H1 (cell line): ENCODE measurements at regions of chr21 and their contacts with region 1.

Region 1: DNA sequence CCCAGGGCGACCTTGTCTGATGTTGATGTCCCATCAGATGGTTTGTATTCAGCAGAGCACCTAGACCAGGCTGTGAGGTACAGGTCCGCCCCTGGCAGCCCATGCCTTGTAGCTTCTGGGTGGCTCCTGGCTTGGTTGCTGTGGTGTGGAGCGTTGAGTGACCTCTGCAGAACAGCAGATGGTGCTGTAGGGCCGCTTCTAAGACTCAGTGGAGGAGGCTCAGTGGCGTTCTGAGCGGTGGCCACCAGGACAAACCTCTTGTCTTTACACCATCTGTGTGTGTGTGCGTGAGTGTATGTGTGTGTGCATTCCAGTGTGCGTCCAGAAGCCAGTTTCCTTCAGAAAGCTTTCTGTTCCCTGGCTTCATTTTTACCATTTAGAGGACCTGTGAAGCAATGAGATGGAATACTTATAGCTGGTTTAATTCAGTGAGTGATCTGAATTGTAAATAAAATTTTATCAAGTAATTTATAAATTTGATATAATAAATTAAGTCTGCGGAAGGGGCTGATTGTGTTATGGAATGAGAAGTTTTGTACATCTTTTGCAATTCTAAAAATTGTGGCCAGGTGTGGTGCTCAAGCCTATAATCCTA is 66.1 kb downstream of the ADARB1 start:
- DNase-seq: peak; percentile 68 to 73
- H3K4me3 ChIP-seq: no peak overlapping the region
- H3K27ac ChIP-seq: no peak overlapping the region
- H3K4me1 ChIP-seq: no peaks in the 10 kb centered on the region
- H3K27me3 ChIP-seq: no peaks in the 10 kb centered on the region
- CTCF ChIP-seq: peak; percentile 90 to 99 (median 99)
- EP300 ChIP-seq: no peak
- POLR2A ChIP-seq: no peak
- RAD21 ChIP-seq: peak; percentile 97

Region 2: DNA sequence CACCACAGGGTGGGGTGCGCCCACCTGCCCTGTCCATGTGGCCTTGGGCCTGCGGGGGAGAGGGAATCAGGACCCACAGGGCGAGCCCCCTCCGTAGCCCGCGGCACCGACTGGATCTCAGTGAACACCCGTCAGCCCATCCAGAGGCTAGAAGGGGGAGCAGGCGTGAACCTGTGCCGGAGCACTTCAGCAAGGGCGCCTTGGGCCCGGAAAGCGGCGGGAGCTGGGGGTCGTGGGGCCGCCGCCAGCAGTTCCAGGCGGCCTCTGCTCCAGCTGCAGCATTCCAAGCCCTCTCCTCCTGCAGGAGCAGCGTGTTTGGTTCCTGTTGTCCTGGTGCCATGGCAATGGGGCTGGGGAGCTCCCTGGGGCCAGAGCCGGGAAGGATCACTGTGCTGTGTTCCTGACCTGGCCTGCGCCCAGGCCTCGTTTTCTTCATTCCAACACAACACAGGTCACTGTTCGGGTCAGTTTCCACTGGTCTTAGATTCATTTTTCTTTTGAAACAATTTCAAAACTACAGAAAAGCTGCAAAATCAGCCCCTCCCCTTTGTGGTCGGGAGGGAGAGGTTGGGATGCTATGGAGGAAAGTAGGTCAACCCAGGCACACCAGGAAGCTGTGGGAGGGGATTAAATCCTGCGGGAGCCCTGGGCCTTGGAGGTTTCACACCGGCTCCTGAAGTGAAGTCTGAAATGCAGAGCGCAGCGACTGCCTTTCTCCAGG is 181.8 kb before region 1 on chr21:
- CTCF ChIA-PET with region 1: interaction called, 19 read pairs
- POLR2A ChIA-PET with region 1: no interaction called
- DNase-seq: no peak
- H3K4me3 ChIP-seq: no peak overlapping the region
- H3K27ac ChIP-seq: 0 out of 2 replicates have a peak overlapping the region, but pooled peaks have one; percentile 38
- H3K4me1 ChIP-seq: no peaks in the 10 kb centered on the region
- H3K27me3 ChIP-seq: no peaks in the 10 kb centered on the region
- CTCF ChIP-seq: no peak
- EP300 ChIP-seq: no peak
- POLR2A ChIP-seq: no peak
- RAD21 ChIP-seq: no peak

Region 3: GRCh38 chr21:45000977-45001728 is 139.3 kb before region 1 on chr21:
- CTCF ChIA-PET with region 1: interaction called, 20 read pairs
- POLR2A ChIA-PET with region 1: no interaction called
- DNase-seq: no peak
- H3K4me3 ChIP-seq: no peak overlapping the region
- H3K27ac ChIP-seq: no peak overlapping the region
- H3K4me1 ChIP-seq: peaks cover 0 to 3% (median 0%) of the 10 kb centered on the region in 4 experiments; a peak in 1 of 7 replicates
- H3K27me3 ChIP-seq: peaks cover 0 to 2% (median 0%) of the 10 kb centered on the region in 4 experiments; a peak in 2 of 7 replicates
- CTCF ChIP-seq: no peak
- EP300 ChIP-seq: no peak
- POLR2A ChIP-seq: no peak
- RAD21 ChIP-seq: no peak

Region 4: GRCh38 chr21:45087022-45087823 is 53.2 kb before region 1 on chr21:
- CTCF ChIA-PET with region 1: interaction called, 15 read pairs
- POLR2A ChIA-PET with region 1: no interaction called
- DNase-seq: no peak
- H3K4me3 ChIP-seq: no peak overlapping the region
- H3K27ac ChIP-seq: no peak overlapping the region
- H3K4me1 ChIP-seq: no peaks in the 10 kb centered on the region; a peak in 1 of 7 replicates
- H3K27me3 ChIP-seq: no peaks in the 10 kb centered on the region; a peak in 1 of 7 replicates
- CTCF ChIP-seq: no peak
- EP300 ChIP-seq: no peak
- POLR2A ChIP-seq: no peak
- RAD21 ChIP-seq: no peak

Region 5: GRCh38 chr21:45120975-45121374 is 19.5 kb before region 1 on chr21:
- CTCF ChIA-PET with region 1: interaction called, 144 read pairs
- POLR2A ChIA-PET with region 1: interaction called, 4 read pairs
- DNase-seq: no peak
- H3K4me3 ChIP-seq: no peak overlapping the region
- H3K27ac ChIP-seq: no peak overlapping the region
- H3K4me1 ChIP-seq: no peaks in the 10 kb centered on the region
- H3K27me3 ChIP-seq: no peaks in the 10 kb centered on the region
- CTCF ChIP-seq: no peak
- EP300 ChIP-seq: no peak
- POLR2A ChIP-seq: no peak
- RAD21 ChIP-seq: no peak

Region 6: DNA sequence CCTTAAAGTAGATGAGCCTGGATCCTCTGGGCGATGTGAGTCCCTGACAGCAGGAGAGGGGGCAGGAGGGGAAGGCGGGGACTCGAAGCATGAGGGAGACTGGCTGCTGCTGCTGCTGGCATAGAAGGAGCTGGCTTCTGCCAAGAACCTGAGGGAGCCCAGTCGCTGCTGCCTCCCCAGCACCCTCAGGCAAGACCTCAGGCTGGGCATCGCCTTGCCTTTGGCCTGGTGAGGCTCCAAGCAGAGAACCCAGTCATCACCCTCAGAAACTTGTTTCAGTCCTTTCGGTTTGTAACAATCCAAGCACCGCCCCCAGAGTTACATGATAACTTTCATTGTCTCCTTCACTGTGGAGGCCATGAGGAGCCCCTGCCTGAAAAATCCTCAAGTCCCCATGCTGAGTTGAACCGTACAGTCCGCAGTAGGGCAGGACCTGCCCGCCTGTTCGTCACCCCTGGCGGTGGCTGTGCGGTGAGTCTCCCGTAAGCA is 108.5 kb after region 1 on chr21:
- CTCF ChIA-PET with region 1: interaction called, 28 read pairs
- POLR2A ChIA-PET with region 1: no interaction called
- DNase-seq: peak in 1 of 2 experiments; percentile 62
- H3K4me3 ChIP-seq: peak overlapping the region in 3 of 4 experiments; percentile 26 to 46 (median 26); a peak in 5 of 8 replicates
- H3K27ac ChIP-seq: no peak overlapping the region
- H3K4me1 ChIP-seq: peaks cover 0 to 13% (median 7%) of the 10 kb centered on the region in 4 experiments; a peak in 5 of 7 replicates
- H3K27me3 ChIP-seq: no peaks in the 10 kb centered on the region; a peak in 1 of 7 replicates
- CTCF ChIP-seq: no peak
- EP300 ChIP-seq: no peak
- POLR2A ChIP-seq: no peak
- RAD21 ChIP-seq: no peak

Region 7: DNA sequence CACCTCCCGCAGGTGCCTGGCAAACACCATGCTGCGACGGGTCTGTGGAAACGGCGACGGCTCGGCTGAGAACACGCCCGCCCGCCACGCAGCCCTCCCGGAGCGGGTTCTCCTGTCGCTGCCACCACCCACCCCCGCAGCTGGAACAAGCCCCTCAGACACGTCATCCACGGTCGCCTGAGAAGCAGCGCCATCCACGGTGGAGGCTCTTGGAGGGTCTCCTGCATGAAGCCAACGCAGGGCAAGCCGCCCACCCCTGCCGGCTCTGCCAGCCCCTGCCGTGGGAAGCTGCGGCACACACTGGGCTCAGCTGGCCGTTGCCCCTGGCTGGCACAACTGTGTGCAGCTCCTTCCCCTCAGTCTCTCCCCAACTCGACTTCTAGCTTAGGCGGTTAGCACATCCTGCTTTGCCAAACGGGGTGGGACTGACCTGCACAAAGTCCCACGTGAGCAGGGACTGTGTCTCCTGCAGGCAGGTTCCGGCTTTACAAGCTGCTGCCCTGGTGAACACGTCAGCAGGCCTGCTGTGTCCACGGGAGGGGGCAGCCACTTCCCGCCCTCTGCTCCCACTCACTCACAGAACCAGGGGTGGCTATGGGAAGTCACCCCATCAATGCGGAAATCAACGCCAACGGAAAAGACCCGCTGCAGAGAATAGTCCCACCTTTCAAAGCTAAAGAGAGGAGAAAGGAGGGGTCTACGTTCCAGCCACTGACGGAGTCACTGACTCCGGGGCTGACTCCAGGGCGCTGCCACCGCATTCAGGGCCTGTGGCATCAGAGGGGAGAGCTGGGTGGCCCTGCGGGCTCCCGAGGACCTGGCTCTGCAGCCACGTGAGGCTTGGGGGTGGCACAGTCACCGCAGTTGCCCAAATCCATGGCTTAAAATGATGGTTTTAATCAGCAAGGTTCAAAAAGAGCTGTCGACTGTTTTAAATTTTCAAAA is 136.9 kb after region 1 on chr21:
- CTCF ChIA-PET with region 1: interaction called, 16 read pairs
- POLR2A ChIA-PET with region 1: no interaction called
- DNase-seq: no peak
- H3K4me3 ChIP-seq: no peak overlapping the region
- H3K27ac ChIP-seq: no peak overlapping the region
- H3K4me1 ChIP-seq: no peaks in the 10 kb centered on the region
- H3K27me3 ChIP-seq: no peaks in the 10 kb centered on the region
- CTCF ChIP-seq: no peak
- EP300 ChIP-seq: no peak
- POLR2A ChIP-seq: no peak
- RAD21 ChIP-seq: no peak